ENCODE measurements at regions of chr15 and their contacts with region 1.

Region 1: GRCh38 chr15:28947221-28947674 is 61.5 kb downstream of the APBA2 start:
- DNase-seq: peak; percentile 25
- ATAC-seq: no peak
- H3K4me3 Mint-ChIP-seq: no peak overlapping the region
- H3K27ac Mint-ChIP-seq: peak overlapping the region; percentile 19
- H3K4me1 Mint-ChIP-seq: peaks cover 54% of the 10 kb centered on the region
- H3K27me3 Mint-ChIP-seq: no peaks in the 10 kb centered on the region

Region 2: GRCh38 chr15:28935326-28935725 is 11.9 kb before region 1 on chr15:
- POLR2A ChIA-PET with region 1: interaction called, 10 read pairs
- DNase-seq: peak; percentile 77
- ATAC-seq: peak; percentile 80
- H3K4me3 Mint-ChIP-seq: peak overlapping the region; percentile 67
- H3K27ac Mint-ChIP-seq: peak overlapping the region; percentile 85
- H3K4me1 Mint-ChIP-seq: peaks cover 61% of the 10 kb centered on the region
- H3K27me3 Mint-ChIP-seq: no peaks in the 10 kb centered on the region

Region 3: GRCh38 chr15:29070449-29071231 is 123.4 kb after region 1 on chr15:
- POLR2A ChIA-PET with region 1: no interaction called
- DNase-seq: no peak
- ATAC-seq: no peak
- H3K4me3 Mint-ChIP-seq: no peak overlapping the region
- H3K27ac Mint-ChIP-seq: no peak overlapping the region
- H3K4me1 Mint-ChIP-seq: peaks cover 5% of the 10 kb centered on the region
- H3K27me3 Mint-ChIP-seq: no peaks in the 10 kb centered on the region